ENCODE measurements at regions of chr17 and their contacts with region 1.

Region 1: GRCh38 chr17:39547713-39548478 is 59.8 kb downstream of the NEUROD2 start:
- DNase-seq: peak; percentile 88
- ATAC-seq: peak; percentile 91
- H3K4me3 Mint-ChIP-seq: no peak overlapping the region
- H3K27ac Mint-ChIP-seq: no peak overlapping the region; the same call in 1 of the 2 replicates
- H3K4me1 Mint-ChIP-seq: no peaks in the 10 kb centered on the region
- H3K27me3 Mint-ChIP-seq: no peaks in the 10 kb centered on the region; the same call in 1 of the 2 replicates
- CTCF ChIP-seq: peak; percentile 94

Region 2: GRCh38 chr17:39304188-39304587 is 243.7 kb before region 1 on chr17:
- CTCF ChIA-PET with region 1: no interaction called
- POLR2A ChIA-PET with region 1: no interaction called
- DNase-seq: no peak
- ATAC-seq: no peak
- H3K4me3 Mint-ChIP-seq: no peak overlapping the region
- H3K27ac Mint-ChIP-seq: no peak overlapping the region
- H3K4me1 Mint-ChIP-seq: peaks cover 7% of the 10 kb centered on the region; the same call in 1 of the 2 replicates
- H3K27me3 Mint-ChIP-seq: no peaks in the 10 kb centered on the region
- CTCF ChIP-seq: no peak

Region 3: GRCh38 chr17:39385040-39385439 is 162.9 kb before region 1 on chr17:
- CTCF ChIA-PET with region 1: no interaction called
- POLR2A ChIA-PET with region 1: no interaction called
- DNase-seq: no peak
- ATAC-seq: no peak
- H3K4me3 Mint-ChIP-seq: no peak overlapping the region
- H3K27ac Mint-ChIP-seq: no peak overlapping the region
- H3K4me1 Mint-ChIP-seq: no peaks in the 10 kb centered on the region
- H3K27me3 Mint-ChIP-seq: no peaks in the 10 kb centered on the region
- CTCF ChIP-seq: no peak

Region 4: GRCh38 chr17:39443326-39443725 is 104.6 kb before region 1 on chr17:
- CTCF ChIA-PET with region 1: no interaction called
- POLR2A ChIA-PET with region 1: no interaction called
- DNase-seq: no peak
- ATAC-seq: no peak
- H3K4me3 Mint-ChIP-seq: no peak overlapping the region
- H3K27ac Mint-ChIP-seq: no peak overlapping the region
- H3K4me1 Mint-ChIP-seq: no peaks in the 10 kb centered on the region
- H3K27me3 Mint-ChIP-seq: no peaks in the 10 kb centered on the region
- CTCF ChIP-seq: no peak

Region 5: GRCh38 chr17:39563476-39563875 is 15.6 kb after region 1 on chr17:
- CTCF ChIA-PET with region 1: interaction called, 31 read pairs
- POLR2A ChIA-PET with region 1: no interaction called
- DNase-seq: peak; percentile 46
- ATAC-seq: peak; percentile 59
- H3K4me3 Mint-ChIP-seq: peak overlapping the region; percentile 56
- H3K27ac Mint-ChIP-seq: no peak overlapping the region
- H3K4me1 Mint-ChIP-seq: peaks cover 26% of the 10 kb centered on the region
- H3K27me3 Mint-ChIP-seq: no peaks in the 10 kb centered on the region
- CTCF ChIP-seq: no peak

Region 6: GRCh38 chr17:39579318-39580081 is 31.6 kb after region 1 on chr17:
- CTCF ChIA-PET with region 1: interaction called, 116 read pairs
- POLR2A ChIA-PET with region 1: no interaction called
- DNase-seq: peak; percentile 69
- ATAC-seq: peak; percentile 91
- H3K4me3 Mint-ChIP-seq: peak overlapping the region; percentile 29
- H3K27ac Mint-ChIP-seq: peak overlapping the region; percentile 46; the same call in 1 of the 2 replicates
- H3K4me1 Mint-ChIP-seq: peaks cover 37% of the 10 kb centered on the region
- H3K27me3 Mint-ChIP-seq: peaks cover 14% of the 10 kb centered on the region
- CTCF ChIP-seq: no peak

Region 7: GRCh38 chr17:39598047-39598481 is 50.2 kb after region 1 on chr17:
- CTCF ChIA-PET with region 1: interaction called, 86 read pairs
- POLR2A ChIA-PET with region 1: no interaction called
- DNase-seq: no peak
- ATAC-seq: no peak
- H3K4me3 Mint-ChIP-seq: peak overlapping the region; percentile 20; the same call in 1 of the 2 replicates
- H3K27ac Mint-ChIP-seq: no peak overlapping the region
- H3K4me1 Mint-ChIP-seq: peaks cover 59% of the 10 kb centered on the region
- H3K27me3 Mint-ChIP-seq: peaks cover 100% of the 10 kb centered on the region
- CTCF ChIP-seq: no peak

Region 8: DNA sequence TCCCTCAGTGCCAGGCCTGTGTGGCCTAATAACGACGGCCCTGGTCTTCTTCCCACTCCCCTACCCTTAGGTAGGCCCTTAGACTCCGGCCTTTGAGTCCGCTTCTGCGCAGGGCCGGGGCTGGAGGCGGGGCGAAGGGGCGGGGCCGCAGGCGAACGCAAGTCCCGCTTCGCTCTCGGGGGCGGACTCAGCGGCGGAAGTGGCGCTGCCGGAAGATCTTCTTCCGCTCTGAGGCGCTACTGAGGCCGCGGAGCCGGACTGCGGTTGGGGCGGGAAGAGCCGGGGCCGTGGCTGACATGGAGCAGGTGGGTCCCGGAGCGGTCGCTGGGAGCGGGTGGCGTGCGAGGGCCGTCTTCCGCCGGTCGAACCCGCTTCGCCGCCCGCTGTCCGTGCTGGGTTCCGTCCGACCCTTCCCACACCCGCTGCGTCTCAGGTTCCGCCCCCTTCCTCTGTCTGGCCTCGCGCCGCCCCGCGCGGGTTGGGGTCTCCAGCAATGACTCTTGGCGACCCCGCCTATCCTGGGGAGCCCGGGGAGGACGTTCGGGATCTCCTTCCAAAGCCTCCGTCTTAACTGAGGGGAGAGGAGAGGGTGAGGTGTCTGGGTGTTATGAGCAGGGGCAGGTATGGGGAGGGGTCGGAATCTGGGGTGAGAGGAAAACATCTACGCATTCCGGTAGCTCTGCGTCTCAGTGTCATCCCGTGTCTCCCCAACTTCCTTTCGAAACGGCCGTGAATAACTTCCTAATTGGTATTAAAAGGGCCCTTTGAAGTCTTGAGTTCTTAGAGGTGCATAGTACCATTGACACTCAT is 89.2 kb after region 1 on chr17 and contains the start of gene STARD3:
- CTCF ChIA-PET with region 1: interaction called, 19 read pairs
- POLR2A ChIA-PET with region 1: no interaction called
- DNase-seq: peak; percentile 94
- ATAC-seq: peak; percentile 72
- H3K4me3 Mint-ChIP-seq: peak within 1 kb of the TSS; percentile 76
- H3K27ac Mint-ChIP-seq: peak within 1 kb of the TSS; percentile 64
- H3K4me1 Mint-ChIP-seq: peaks cover 70% of the 10 kb centered on the region
- H3K27me3 Mint-ChIP-seq: no peaks in the 10 kb centered on the region
- CTCF ChIP-seq: no peak
- total RNA-seq, gene STARD3: 64.9 to 75.3 TPM (median 65.4 TPM) in 3 replicates

Region 9: DNA sequence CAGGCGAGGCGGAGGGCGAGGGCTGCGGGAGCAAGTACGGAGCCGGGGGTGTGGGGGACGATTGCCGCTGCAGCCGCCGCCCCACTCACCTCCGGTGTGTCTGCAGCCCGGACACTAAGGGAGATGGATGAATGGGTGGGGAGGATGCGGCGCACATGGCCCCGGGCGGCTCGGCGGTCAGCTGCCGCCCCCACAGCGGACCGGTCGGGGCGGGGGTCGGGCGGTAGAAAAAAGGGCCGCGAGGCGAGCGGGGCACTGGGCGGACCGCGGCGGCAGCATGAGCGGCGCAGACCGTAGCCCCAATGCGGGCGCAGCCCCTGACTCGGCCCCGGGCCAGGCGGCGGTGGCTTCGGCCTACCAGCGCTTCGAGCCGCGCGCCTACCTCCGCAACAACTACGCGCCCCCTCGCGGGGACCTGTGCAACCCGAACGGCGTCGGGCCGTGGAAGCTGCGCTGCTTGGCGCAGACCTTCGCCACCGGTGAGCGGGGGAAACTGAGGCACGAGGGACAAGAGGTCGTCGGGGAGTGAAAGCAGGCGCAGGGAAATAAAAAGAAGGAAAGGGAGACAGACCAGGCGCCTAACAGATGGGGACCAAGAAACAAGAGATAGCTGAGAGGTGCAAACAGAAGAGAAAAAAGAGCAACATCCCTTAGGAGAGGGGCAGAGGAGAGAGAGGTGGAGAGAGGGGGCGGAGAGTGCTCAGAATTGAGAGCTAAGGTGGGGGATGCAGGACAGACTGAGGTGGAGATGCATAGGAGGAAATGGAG is 120.5 kb after region 1 on chr17 and contains the start of gene PNMT:
- CTCF ChIA-PET with region 1: interaction called, 26 read pairs
- POLR2A ChIA-PET with region 1: no interaction called
- DNase-seq: peak; percentile 83
- ATAC-seq: peak; percentile 34
- H3K4me3 Mint-ChIP-seq: peak within 1 kb of the TSS; percentile 71
- H3K27ac Mint-ChIP-seq: no peak within 1 kb of the TSS
- H3K4me1 Mint-ChIP-seq: peaks cover 48% of the 10 kb centered on the region
- H3K27me3 Mint-ChIP-seq: peaks cover 47% of the 10 kb centered on the region
- CTCF ChIP-seq: peak; percentile 26; the same call in 1 of the 2 replicates
- total RNA-seq, gene PNMT: 2.4 to 3.1 TPM (median 2.7 TPM) in 3 replicates

Measured in WTC11 (cell line).